ENCODE measurements at regions of chr6 and their contacts with region 1.

Region 1: DNA sequence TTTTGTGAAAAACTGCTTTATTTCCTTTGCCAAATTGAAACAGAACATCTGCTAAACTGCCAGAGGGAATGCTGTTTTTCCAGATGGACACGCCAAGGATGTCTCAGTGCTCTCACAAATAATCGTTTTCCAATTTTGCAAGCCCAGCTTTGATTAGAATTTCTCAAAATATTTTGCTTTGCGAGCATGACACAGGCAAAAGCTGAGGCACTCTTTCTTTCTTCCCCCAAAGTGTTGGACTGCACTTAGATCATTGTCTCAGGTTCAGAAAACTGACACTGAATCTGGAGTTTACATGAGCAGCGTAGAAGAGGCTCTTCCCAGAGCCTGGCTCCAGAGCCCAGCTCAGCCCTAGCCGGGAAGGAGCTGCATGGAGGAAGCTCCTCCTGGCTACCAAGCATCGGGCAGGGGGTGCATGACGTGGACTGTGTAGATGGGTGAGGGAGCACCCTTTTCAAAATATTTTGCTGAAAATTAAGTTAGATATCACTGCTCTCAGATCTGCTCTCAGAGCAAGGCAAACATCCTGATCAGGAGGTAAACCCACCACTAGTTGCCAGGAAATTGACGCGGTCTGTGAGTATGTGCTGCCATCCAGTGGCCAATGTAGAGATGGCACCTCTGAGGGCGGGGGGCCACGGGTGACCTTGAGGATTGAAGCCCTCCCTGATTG is 107.5 kb downstream of the SLC22A3 start:
- DNase-seq: peak; percentile 58
- CTCF ChIP-seq: peak; percentile 94

Region 2: GRCh38 chr6:159852877-159853276 is 602.8 kb before region 1 on chr6:
- in situ Hi-C with region 1: loop called (anchors 25 kb)
- DNase-seq: no peak
- CTCF ChIP-seq: no peak

Region 3: DNA sequence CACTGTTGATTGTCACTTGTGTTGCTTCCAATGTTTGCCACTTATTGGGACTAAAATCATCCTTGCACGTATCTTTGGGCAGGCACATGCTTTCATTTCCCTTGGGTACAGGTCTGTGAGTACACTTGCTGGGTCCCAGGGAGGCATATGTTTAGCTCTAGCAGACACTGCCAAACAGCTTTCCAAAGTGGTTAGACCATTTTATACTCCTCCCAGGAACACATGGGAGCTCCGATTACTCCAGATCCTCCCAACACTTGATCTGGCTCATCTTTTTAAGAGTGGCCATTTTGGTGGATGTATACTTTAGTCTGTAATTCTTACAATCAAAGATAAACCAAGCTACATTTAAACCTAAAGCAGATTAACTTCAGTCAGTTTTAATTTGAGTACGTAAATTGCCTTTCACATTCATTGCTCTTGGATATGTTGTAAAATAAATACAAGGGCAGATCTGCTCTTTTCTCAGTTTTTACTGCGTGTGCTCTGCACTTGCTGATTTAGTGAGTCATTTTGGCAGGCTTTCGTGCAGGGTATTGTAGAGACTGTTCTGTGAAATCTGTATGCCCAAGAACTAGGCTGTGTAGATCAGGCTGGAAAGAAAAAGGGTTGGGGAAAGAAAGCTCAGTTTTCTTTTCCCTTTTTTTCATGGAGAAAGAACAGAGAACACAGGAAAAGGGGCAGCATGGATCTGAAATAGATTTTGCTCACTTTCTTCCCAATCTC is 314.5 kb before region 1 on chr6:
- in situ Hi-C with region 1: loop called (anchors 10 kb)
- DNase-seq: no peak
- CTCF ChIP-seq: no peak